ENCODE measurements at regions of chr2 and their contacts with region 1.

Region 1: DNA sequence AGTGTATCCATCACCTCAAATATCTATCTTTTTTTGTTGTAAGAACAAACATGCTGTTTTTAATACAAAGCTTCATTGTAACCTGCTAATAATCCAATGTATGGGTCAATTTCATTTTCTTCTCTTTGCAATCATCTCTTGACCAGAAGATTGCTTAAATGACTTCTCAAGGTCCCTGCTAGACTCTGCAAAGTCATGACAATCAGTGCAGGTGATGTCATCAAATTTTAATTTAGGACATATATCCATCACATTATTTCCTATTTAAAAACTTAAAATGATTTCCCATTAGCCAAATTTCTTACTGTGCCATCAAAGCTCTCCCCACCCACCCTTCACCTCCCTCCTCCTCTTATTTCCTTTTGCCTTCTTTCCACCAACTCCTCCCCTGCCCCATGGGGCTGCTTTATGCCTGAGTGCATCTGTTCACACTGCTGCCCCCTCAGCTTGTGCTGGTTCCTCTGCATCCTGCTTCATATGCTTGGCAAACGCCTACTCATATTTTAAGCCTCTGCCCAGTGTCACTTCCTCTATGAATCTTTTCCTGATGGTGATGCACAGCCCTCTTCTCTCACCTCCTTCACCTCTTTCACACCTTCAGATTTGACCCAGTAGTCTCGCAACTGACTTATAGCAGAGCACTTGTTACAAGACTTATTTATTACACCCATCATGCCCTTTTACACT is 20.3 kb downstream of the PLEK start:
- DNase-seq: no peak
- H3K4me3 Mint-ChIP-seq: peak overlapping the region; percentile 42
- H3K27ac Mint-ChIP-seq: peak overlapping the region; percentile 91
- H3K4me1 Mint-ChIP-seq: peaks cover 49% of the 10 kb centered on the region
- H3K27me3 Mint-ChIP-seq: peaks cover 2% of the 10 kb centered on the region

Region 2: DNA sequence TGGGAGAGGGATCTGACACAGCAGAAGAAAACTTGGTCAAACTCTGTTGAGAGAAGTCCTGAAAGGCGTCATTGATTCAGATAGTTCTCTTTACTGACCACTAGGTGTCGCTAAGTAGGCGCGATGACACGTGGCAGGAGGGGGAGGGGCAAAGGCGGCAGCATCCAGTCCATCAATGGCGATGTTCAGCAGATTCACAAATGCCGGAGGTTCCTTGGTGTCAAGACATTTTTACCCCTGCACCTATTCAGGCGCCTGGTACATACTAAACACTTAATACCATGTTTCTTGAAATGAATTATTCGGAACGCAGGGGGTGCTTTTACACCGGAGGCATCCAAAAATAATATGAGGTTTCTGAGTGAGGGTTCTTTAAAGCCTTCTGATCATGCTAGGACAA is 23.3 kb before region 1 on chr2:
- intact Hi-C with region 1: loop called (anchors 1 kb)
- DNase-seq: peak; percentile 65
- H3K4me3 Mint-ChIP-seq: peak overlapping the region; percentile 32
- H3K27ac Mint-ChIP-seq: peak overlapping the region; percentile 36
- H3K4me1 Mint-ChIP-seq: peaks cover 26% of the 10 kb centered on the region
- H3K27me3 Mint-ChIP-seq: peaks cover 12% of the 10 kb centered on the region

Region 3: GRCh38 chr2:68423966-68424650 is 38.7 kb after region 1 on chr2:
- intact Hi-C with region 1: loop called (anchors 1 kb)
- DNase-seq: no peak
- H3K4me3 Mint-ChIP-seq: no peak overlapping the region
- H3K27ac Mint-ChIP-seq: no peak overlapping the region
- H3K4me1 Mint-ChIP-seq: peaks cover 21% of the 10 kb centered on the region
- H3K27me3 Mint-ChIP-seq: peaks cover 4% of the 10 kb centered on the region

Region 4: GRCh38 chr2:68519236-68519635 is 133.9 kb after region 1 on chr2:
- intact Hi-C with region 1: loop called (anchors 1 kb)
- DNase-seq: no peak
- H3K4me3 Mint-ChIP-seq: no peak overlapping the region
- H3K27ac Mint-ChIP-seq: no peak overlapping the region
- H3K4me1 Mint-ChIP-seq: peaks cover 24% of the 10 kb centered on the region
- H3K27me3 Mint-ChIP-seq: no peaks in the 10 kb centered on the region

Region 5: DNA sequence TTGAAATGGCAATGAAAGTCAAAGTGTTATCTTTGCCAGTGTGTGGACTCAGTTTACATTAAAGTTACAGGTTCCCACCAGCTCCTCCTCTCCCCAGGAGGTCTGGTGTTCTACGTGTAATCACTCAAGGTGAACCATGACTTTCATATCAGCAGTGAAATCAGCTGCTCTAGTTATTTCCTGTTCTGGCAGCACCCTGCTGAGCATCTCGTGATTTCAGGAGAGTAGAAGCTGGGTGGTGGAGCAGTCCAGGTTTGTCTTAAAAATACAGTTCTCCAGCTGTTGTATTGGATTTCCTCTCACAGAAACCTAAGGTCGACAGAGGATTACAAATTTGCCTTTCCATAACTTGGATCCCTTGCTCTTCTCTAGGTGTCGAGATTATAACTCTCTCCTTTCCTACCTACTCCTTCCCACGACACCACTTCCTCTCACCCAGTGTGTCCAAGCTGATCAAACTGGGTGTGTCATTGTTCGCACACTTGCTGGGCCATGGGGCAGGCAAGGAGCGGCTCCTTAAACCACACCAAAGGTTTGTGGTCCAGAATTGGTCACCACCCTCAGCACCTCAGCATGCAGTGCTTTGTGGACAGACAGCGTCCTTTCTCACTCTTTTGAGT is 336.2 kb after region 1 on chr2:
- intact Hi-C with region 1: loop called (anchors 2 kb)
- DNase-seq: peak; percentile 44
- H3K4me3 Mint-ChIP-seq: peak overlapping the region; percentile 54
- H3K27ac Mint-ChIP-seq: peak overlapping the region; percentile 91
- H3K4me1 Mint-ChIP-seq: peaks cover 100% of the 10 kb centered on the region
- H3K27me3 Mint-ChIP-seq: peaks cover 2% of the 10 kb centered on the region

Region 6: DNA sequence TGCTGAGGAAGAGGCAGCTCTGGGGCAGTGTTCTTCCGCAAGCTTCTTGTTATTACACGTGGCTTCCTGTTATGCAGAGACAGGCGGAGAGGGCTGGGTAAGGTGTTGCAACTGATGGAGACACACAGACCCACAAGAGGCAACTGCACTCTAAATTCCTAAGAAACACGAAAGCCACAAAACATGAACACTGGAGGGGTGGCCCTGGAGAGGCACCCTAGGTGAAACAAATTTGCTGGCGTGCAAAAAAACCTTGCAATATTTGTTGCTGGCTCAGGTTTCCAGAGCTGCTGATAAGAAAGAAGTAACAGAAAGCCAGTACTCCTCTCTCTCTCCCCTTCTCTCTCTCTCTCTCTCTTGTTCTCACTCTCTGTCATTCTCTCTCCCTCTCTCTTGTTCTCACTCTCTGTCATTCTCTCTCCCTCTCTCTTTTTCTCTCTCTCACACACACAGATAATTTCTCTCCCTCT is 381.0 kb after region 1 on chr2:
- intact Hi-C with region 1: loop called (anchors 1 kb)
- DNase-seq: peak; percentile 75
- H3K4me3 Mint-ChIP-seq: peak overlapping the region; percentile 65
- H3K27ac Mint-ChIP-seq: peak overlapping the region; percentile 92
- H3K4me1 Mint-ChIP-seq: peaks cover 96% of the 10 kb centered on the region
- H3K27me3 Mint-ChIP-seq: no peaks in the 10 kb centered on the region

Region 7: DNA sequence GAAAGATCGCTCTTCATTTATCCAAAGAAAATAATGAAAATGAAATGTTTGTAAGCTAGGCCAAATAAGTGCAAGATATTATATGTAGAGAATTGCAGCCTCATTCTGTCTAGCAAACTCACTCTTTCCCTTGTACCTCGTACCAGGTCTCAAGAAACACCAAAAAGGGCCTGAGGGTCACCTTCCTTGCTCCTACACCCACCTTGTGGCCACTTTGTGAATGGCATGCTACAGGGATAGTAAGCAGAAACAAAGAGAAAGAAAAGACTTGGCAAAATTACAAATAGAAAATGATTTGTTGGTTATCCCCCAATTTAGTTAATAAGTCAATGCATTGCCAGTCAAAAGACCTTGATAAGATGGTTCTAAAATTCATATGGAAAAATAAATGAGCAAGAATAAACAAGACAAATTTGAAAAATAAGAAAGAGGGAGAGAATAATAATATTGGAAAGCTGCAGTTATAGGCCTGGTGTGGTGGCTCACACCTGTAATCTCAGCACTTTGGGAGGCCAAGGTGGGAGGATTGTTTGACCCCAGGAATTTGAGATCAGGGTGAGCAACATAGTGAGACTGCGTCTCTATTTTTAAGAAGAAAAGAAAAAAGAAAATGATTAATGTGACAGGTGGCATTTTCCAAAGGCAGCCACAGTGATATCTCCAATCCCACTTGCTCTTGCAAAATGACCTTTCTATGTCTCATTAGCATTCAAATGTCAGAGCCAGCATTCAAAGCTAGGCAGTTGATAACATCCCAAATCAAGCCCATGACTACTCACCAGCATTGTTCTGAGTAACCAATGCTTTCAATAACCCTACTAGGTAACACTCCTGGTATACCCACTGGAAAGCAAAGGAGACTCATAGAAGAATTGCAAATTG is 524.7 kb after region 1 on chr2:
- intact Hi-C with region 1: loop called (anchors 10 kb)
- DNase-seq: peak; percentile 56
- H3K4me3 Mint-ChIP-seq: peak overlapping the region; percentile 12
- H3K27ac Mint-ChIP-seq: peak overlapping the region; percentile 70
- H3K4me1 Mint-ChIP-seq: peaks cover 33% of the 10 kb centered on the region
- H3K27me3 Mint-ChIP-seq: no peaks in the 10 kb centered on the region

Measured in activated T-helper 1 cell treated with anti-CD3 and anti-CD28 coated beads, Interleukin-12 subunit alpha, Interleukin-12 subunit beta, Interleukin-2, Interleukin-4 antibody, amounts not matched to agents 30 ng/mL and 10 ng/mL and 1 ng/mL, durations not matched to agents 14 hours and 24 hours and 36 hours (primary cell).